GM12878 (cell line): ENCODE measurements at regions of chr12 and their contacts with region 1.

Region 1: DNA sequence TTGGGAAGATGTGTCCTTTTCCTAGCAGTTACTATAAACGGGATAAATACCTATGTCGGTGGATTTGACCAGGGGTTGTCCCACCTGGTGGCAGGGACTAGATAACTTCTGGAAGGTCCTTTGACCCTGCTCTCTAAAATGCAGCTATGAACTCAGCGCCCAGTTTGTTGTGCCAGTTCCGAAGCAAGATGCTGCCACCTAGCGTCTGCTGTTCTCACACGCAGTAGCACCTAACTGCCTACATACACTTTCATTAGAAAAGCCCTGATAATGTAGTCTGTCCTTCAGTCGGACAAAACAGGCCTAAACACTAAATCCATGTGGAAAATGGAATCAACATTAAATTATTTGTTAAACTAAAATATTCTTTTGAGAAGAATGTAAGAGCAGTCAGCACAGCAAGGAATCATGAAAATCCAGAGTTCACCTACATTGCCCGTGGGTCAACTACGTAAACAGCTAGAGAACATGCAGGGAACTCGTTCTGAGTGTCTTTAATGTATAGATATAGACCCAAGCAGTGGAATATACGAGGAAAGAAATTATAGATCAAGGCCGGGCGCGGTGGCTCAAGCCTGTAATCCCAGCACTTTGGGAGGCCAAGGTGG is 51.1 kb upstream of the CRACR2A start:
- DNase-seq: peak; percentile 23
- ATAC-seq: peak; percentile 98
- H3K4me3 ChIP-seq: no peak overlapping the region
- H3K27ac ChIP-seq: no peak overlapping the region
- H3K4me1 ChIP-seq: no peaks in the 10 kb centered on the region
- H3K27me3 ChIP-seq: no peaks in the 10 kb centered on the region
- CTCF ChIP-seq: peak; percentile 86 to 93 (median 91)
- EP300 ChIP-seq: no peak
- POLR2A ChIP-seq: no peak
- RAD21 ChIP-seq: peak; percentile 87

Region 2: GRCh38 chr12:3313675-3314663 is 490.0 kb before region 1 on chr12:
- CTCF ChIA-PET with region 1: interaction called, 19 read pairs
- POLR2A ChIA-PET with region 1: no interaction called
- RAD21 ChIA-PET with region 1: interaction called, 7 read pairs
- SMC1A ChIA-PET with region 1: interaction called, 5 read pairs
- in situ Hi-C with region 1: no loop called
- intact Hi-C with region 1: no loop called
- DNase-seq: no peak
- ATAC-seq: peak; percentile 91
- H3K4me3 ChIP-seq: no peak overlapping the region
- H3K27ac ChIP-seq: no peak overlapping the region
- H3K4me1 ChIP-seq: no peaks in the 10 kb centered on the region
- H3K27me3 ChIP-seq: no peaks in the 10 kb centered on the region; a peak in 2 of 4 replicates
- CTCF ChIP-seq: peak; percentile 40 to 44 (median 41); a peak in 5 of 6 replicates
- EP300 ChIP-seq: no peak
- POLR2A ChIP-seq: no peak
- RAD21 ChIP-seq: peak; percentile 34

Region 3: GRCh38 chr12:3658327-3659163 is 145.4 kb before region 1 on chr12:
- CTCF ChIA-PET with region 1: interaction called, 7 read pairs
- POLR2A ChIA-PET with region 1: no interaction called
- RAD21 ChIA-PET with region 1: interaction called, 3 read pairs
- SMC1A ChIA-PET with region 1: no interaction called
- in situ Hi-C with region 1: no loop called
- intact Hi-C with region 1: loop called (anchors 1 kb)
- DNase-seq: no peak
- ATAC-seq: no peak
- H3K4me3 ChIP-seq: no peak overlapping the region
- H3K27ac ChIP-seq: no peak overlapping the region
- H3K4me1 ChIP-seq: no peaks in the 10 kb centered on the region
- H3K27me3 ChIP-seq: no peaks in the 10 kb centered on the region
- CTCF ChIP-seq: peak; percentile 29 to 32 (median 31); a peak in 4 of 6 replicates
- EP300 ChIP-seq: no peak
- POLR2A ChIP-seq: no peak
- RAD21 ChIP-seq: 0 out of 2 replicates have a peak, but pooled peaks have one; percentile 24

Region 4: DNA sequence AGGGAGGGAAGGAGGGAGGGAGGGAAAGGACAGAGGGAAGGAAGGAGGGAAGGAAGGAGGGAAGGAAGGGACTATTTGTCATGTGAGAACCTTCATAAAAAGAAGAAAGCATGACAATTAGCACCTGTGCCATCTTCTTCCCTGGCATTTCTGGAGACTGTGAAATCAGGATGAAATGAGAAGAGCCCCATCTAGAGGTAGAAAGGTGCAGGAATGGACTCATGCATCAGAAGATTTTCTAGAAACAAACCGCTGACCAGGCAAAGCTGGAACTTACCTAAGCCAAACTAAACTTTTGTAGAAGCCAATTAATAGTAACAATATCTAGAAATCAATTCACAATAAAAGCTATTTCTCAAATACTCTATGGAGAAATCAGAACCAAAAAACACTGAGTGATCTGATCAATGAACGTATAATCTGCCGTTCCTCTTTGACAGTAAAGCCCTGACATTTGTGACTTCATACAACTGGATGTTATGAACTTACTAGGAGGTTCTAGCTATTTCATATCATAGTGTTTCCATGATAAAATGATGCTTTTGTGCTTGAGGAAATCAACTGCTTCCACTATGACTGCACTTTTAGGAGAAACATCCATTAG is 26.7 kb before region 1 on chr12:
- CTCF ChIA-PET with region 1: interaction called, 11 read pairs
- POLR2A ChIA-PET with region 1: no interaction called
- RAD21 ChIA-PET with region 1: interaction called, 3 read pairs
- SMC1A ChIA-PET with region 1: interaction called, 4 read pairs
- in situ Hi-C with region 1: no loop called
- intact Hi-C with region 1: no loop called
- DNase-seq: no peak
- ATAC-seq: peak; percentile 69; the same call in 2 of the 3 replicates
- H3K4me3 ChIP-seq: no peak overlapping the region
- H3K27ac ChIP-seq: no peak overlapping the region
- H3K4me1 ChIP-seq: no peaks in the 10 kb centered on the region
- H3K27me3 ChIP-seq: no peaks in the 10 kb centered on the region
- CTCF ChIP-seq: peak; percentile 56 to 72 (median 65); a peak in 5 of 6 replicates
- EP300 ChIP-seq: no peak
- POLR2A ChIP-seq: no peak
- RAD21 ChIP-seq: peak; percentile 79

Region 5: DNA sequence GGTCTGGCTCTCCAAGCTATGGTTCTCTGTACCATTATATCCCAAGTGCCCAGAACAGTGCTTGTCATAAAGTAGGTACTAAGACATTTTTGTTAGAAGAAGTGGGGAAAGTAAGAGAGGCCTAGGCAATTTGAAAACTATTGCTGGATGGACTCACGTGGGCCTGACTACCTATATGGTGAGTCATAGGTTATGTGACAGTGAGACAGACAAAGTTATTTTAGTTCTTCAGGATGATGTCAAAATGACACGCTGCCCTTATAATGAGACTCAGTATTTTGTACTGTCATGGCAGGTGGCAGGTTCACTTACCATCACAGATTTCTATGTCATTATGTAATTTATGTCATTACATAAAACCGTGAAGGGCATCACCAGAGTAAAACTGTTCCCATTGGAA is 16.2 kb after region 1 on chr12:
- CTCF ChIA-PET with region 1: interaction called, 10 read pairs
- POLR2A ChIA-PET with region 1: no interaction called
- RAD21 ChIA-PET with region 1: interaction called, 3 read pairs
- SMC1A ChIA-PET with region 1: interaction called, 6 read pairs
- in situ Hi-C with region 1: no loop called
- intact Hi-C with region 1: no loop called
- DNase-seq: no peak
- ATAC-seq: no peak
- H3K4me3 ChIP-seq: no peak overlapping the region
- H3K27ac ChIP-seq: no peak overlapping the region
- H3K4me1 ChIP-seq: no peaks in the 10 kb centered on the region
- H3K27me3 ChIP-seq: no peaks in the 10 kb centered on the region
- CTCF ChIP-seq: no peak
- EP300 ChIP-seq: no peak
- POLR2A ChIP-seq: no peak
- RAD21 ChIP-seq: no peak

Region 6: DNA sequence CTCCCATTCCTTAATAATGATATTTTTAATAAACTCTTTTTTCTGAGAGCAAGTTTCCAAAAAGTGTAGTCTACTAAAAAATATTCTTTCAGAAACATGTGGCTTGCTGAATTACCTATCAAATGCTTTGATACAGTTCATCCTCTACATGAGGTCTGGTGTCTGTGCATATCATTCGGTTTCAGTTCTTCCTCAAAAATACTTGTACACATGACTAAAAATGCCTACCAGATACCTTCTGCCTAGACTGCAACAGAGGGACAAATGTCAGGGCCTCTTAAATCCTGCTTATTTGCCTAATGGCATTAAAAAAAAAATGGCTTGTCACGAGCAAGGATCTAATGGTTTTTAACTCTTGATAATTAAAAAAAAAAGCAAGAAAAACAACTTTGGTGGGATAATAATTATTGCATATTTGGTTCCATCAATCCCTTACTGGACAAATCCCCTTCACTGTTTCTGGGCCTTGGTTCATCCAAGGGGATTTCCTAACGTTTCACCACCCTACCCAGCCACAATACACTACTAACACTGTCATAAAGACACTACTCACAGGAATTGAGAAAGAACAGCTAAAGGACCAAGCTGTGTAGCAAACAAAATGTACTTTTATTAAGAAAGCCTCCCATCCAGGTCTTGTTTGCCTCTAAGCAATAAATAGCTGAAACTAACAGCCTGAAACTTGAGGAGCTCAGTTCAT is 23.5 kb after region 1 on chr12:
- CTCF ChIA-PET with region 1: interaction called, 15 read pairs
- POLR2A ChIA-PET with region 1: no interaction called
- RAD21 ChIA-PET with region 1: interaction called, 3 read pairs
- SMC1A ChIA-PET with region 1: interaction called, 4 read pairs
- in situ Hi-C with region 1: no loop called
- intact Hi-C with region 1: no loop called
- DNase-seq: peak; percentile 38
- ATAC-seq: peak; percentile 96
- H3K4me3 ChIP-seq: no peak overlapping the region
- H3K27ac ChIP-seq: peak overlapping the region; percentile 75
- H3K4me1 ChIP-seq: peaks cover 13% of the 10 kb centered on the region
- H3K27me3 ChIP-seq: no peaks in the 10 kb centered on the region
- CTCF ChIP-seq: no peak
- EP300 ChIP-seq: peak in 1 of 2 experiments; percentile 48; a peak in 2 of 4 replicates
- POLR2A ChIP-seq: no peak
- RAD21 ChIP-seq: no peak